ENCODE measurements at regions of chr22 and their contacts with region 1.

Region 1: DNA sequence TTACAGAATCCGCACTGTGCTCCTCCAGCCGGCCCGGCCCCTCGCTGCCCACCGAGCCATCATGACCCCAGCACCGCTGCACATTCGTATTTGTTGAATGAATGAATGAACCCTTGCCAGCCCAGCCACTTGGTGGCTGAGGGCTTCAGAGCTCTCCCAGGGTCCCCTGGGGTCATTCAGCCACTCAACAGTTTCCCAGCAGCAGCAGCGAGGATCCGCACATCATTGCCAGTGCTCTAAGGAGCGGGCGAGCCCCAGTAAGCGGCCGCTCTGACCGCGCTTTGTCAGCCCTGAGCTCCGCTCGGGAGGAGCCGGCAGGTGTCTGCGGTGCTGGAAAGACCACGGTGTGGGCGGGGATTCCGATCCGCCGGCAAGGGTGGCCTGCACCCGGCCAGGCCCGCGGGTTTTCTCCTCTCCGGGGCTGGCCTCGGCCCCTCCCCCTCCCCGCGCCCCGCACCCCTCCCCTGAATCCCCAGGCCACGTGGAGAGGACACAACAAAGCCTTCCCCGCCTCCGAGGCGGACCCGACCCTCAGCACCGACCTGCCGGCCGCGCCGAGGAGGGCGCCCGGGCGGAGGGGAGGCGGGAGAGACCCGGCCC is 563 bp downstream of the BID start:
- DNase-seq: peak; percentile 73
- ATAC-seq: peak; percentile 35
- H3K4me3 ChIP-seq: peak overlapping the region; percentile 2 to 78 (median 62)
- H3K4me3 Mint-ChIP-seq: peak overlapping the region; percentile 87
- H3K27ac ChIP-seq: peak overlapping the region; percentile 57 to 86
- H3K27ac Mint-ChIP-seq: peak overlapping the region; percentile 93
- H3K4me1 ChIP-seq: peaks cover 61 to 86% of the 10 kb centered on the region in 2 donors
- H3K4me1 Mint-ChIP-seq: peaks cover 73% of the 10 kb centered on the region
- H3K27me3 ChIP-seq: no peaks in the 10 kb centered on the region
- H3K27me3 Mint-ChIP-seq: no peaks in the 10 kb centered on the region
- CTCF ChIP-seq: no peak

Region 2: GRCh38 chr22:17597217-17597616 is 176.5 kb before region 1 on chr22:
- CTCF ChIA-PET with region 1: no interaction called
- POLR2A ChIA-PET with region 1: no interaction called
- intact Hi-C with region 1: loop called (anchors 1 kb)
- DNase-seq: no peak
- ATAC-seq: no peak
- H3K4me3 ChIP-seq: no peak overlapping the region
- H3K4me3 Mint-ChIP-seq: no peak overlapping the region
- H3K27ac ChIP-seq: no peak overlapping the region
- H3K27ac Mint-ChIP-seq: no peak overlapping the region
- H3K4me1 ChIP-seq: peaks cover 26 to 27% of the 10 kb centered on the region in 2 donors
- H3K4me1 Mint-ChIP-seq: peaks cover 30% of the 10 kb centered on the region
- H3K27me3 ChIP-seq: no peaks in the 10 kb centered on the region
- H3K27me3 Mint-ChIP-seq: no peaks in the 10 kb centered on the region
- CTCF ChIP-seq: no peak

Region 3: GRCh38 chr22:17742527-17742902 is 31.2 kb before region 1 on chr22:
- CTCF ChIA-PET with region 1: interaction called, 9 read pairs
- POLR2A ChIA-PET with region 1: interaction called, 11 read pairs
- intact Hi-C with region 1: no loop called
- DNase-seq: peak; percentile 85
- ATAC-seq: peak; percentile 94
- H3K4me3 ChIP-seq: no peak overlapping the region
- H3K4me3 Mint-ChIP-seq: no peak overlapping the region
- H3K27ac ChIP-seq: no peak overlapping the region
- H3K27ac Mint-ChIP-seq: peak overlapping the region; percentile 26
- H3K4me1 ChIP-seq: peaks cover 0 to 6% of the 10 kb centered on the region in 2 donors
- H3K4me1 Mint-ChIP-seq: peaks cover 8% of the 10 kb centered on the region
- H3K27me3 ChIP-seq: no peaks in the 10 kb centered on the region
- H3K27me3 Mint-ChIP-seq: no peaks in the 10 kb centered on the region
- CTCF ChIP-seq: peak; percentile 75

Region 4: GRCh38 chr22:17785185-17786184 is 11.8 kb after region 1 on chr22:
- CTCF ChIA-PET with region 1: interaction called, 73 read pairs
- POLR2A ChIA-PET with region 1: interaction called, 14 read pairs
- intact Hi-C with region 1: loop called (anchors 1 kb)
- DNase-seq: peak; percentile 76
- ATAC-seq: peak; percentile 47
- H3K4me3 ChIP-seq: no peak overlapping the region
- H3K4me3 Mint-ChIP-seq: no peak overlapping the region
- H3K27ac ChIP-seq: peak overlapping the region in 1 of 2 donors; percentile 50
- H3K27ac Mint-ChIP-seq: peak overlapping the region; percentile 37
- H3K4me1 ChIP-seq: peaks cover 11 to 16% of the 10 kb centered on the region in 2 donors
- H3K4me1 Mint-ChIP-seq: peaks cover 22% of the 10 kb centered on the region
- H3K27me3 ChIP-seq: no peaks in the 10 kb centered on the region
- H3K27me3 Mint-ChIP-seq: no peaks in the 10 kb centered on the region
- CTCF ChIP-seq: peak; percentile 77

Region 5: DNA sequence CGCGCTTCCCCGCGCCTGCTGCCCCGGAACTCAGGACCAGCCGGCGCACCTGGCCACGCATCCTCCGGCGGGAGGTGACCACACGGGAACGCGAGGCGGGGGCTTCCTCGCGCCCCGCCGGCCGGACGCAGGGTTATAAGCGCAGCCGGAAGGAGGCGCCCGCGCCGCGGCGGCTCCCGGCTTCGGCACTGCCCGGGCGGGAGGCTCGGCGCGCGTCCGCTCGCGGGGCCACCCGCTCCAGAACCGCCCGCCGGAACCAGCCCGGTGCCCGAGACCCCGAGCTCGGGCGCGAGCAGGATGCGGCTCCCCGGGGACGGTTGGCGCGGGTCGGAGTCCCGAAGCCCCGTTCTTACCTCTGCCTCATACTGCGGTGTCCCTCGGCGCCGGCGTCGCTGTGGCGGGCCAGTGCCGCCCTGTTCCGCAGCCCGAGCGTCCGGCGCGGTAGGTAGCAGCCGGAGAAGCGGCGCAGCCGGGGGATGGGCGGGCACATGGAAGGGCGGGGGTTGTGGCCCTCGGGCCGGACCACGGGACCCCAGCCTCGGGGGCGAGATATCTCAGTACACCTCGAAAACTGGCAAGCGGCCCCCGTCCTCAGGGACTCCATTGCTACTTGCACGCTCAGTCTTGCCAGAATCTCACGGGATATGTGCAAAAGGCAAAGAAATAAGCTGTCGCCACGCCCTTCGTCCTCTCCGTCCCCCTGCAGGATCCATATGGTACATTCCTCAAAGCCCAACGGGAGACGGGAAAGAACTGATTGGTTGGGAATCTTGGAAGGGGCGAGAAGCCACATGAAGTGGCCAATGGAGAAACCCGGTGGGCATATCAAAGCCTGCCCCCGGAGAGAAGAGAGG is 227.6 kb after region 1 on chr22:
- CTCF ChIA-PET with region 1: no interaction called
- POLR2A ChIA-PET with region 1: no interaction called
- intact Hi-C with region 1: loop called (anchors 5 kb)
- DNase-seq: peak; percentile 94
- ATAC-seq: peak; percentile 68
- H3K4me3 ChIP-seq: peak overlapping the region; percentile 56 to 87 (median 70)
- H3K4me3 Mint-ChIP-seq: peak overlapping the region; percentile 96
- H3K27ac ChIP-seq: peak overlapping the region; percentile 87 to 95
- H3K27ac Mint-ChIP-seq: peak overlapping the region; percentile 100
- H3K4me1 ChIP-seq: peaks cover 78 to 83% of the 10 kb centered on the region in 2 donors
- H3K4me1 Mint-ChIP-seq: peaks cover 77% of the 10 kb centered on the region
- H3K27me3 ChIP-seq: no peaks in the 10 kb centered on the region
- H3K27me3 Mint-ChIP-seq: no peaks in the 10 kb centered on the region
- CTCF ChIP-seq: peak; percentile 60

Measured in B cell (primary cell).